Mammary epithelial cell (primary cell): ENCODE measurements at regions of chr15 and their contacts with region 1.

Region 1: DNA sequence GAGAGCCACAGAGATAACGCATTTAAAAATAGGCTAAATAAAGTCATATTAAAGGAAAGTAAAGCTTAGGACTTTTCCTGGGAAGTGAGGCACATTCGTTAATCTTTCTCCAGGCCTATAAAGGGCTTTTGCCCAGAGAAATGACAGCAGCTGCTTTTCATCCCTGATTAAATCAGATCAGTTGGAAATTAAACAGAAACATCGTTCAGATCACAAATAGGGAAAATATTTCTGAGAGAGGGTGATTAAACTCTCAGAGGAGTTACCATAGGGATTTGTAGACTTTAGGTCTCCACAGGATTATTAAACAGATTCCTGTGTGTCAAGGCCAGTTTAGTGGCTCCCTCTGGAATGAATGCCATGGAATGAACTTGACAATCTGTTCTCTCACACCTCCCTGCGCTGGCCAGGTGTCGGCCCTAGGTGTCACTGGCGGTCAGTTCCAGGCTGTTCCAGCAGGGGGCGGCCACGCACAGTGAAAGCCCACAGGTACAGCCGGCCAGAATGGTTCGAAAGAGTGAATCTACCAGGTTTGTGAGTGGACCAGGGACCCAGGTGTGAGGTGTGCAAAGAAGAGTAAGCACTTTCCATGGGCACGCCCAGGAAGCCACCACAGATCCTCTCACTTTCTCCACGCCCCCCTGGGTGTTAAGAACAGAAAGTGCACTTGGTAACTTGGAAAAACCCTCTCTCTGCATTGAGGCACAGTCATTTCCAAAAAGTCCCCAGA is 253.0 kb upstream of the RASGRP1 start:
- DNase-seq: peak; percentile 81
- H3K4me3 ChIP-seq: no peak overlapping the region
- H3K27ac ChIP-seq: no peak overlapping the region
- H3K4me1 ChIP-seq: peaks cover 6% of the 10 kb centered on the region
- H3K27me3 ChIP-seq: no peaks in the 10 kb centered on the region
- CTCF ChIP-seq: peak; percentile 99 to 100

Region 2: DNA sequence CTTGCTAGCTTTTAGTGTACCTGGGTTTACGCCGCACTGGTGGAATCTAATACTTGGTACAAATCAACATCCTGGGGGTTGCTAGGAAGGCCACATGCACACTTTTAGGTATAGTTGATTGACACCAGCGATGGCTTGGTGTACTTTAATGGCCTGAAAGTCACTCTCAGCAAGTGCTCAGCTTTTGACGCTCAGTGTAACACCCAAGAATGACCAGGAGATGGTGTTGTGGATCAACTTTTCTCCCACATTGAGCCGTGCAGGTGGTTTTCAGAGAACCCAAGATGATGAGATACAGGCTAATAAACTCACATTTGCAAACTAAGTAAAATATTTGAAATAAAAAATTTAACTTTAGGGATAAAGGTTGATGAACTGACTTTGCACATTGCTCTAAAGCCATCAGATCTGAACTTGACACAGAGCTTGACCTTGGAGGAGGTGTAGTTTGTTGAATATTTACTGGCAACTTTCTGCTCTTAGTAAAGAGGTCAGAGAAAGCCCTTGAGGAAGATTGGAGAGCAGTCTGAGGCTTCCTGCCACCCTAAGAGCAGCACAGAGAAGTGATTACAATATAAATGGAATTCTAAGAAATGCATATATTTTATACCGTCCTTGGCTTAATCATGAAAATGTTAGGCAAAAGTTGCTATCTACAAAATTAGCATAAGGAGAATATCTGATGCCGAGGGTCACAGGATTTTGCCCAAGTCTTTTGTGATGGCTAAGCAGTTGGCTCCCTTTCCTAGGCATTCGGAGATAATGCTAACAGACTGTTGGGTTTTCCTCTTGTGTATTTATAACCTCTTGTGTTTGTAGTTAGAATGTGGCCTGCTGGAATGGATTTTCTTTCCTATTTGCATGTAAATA is 109.6 kb before region 1 on chr15:
- CTCF ChIA-PET with region 1: interaction called, 5 read pairs
- dilution Hi-C with region 1: loop called (anchors 5 kb)
- in situ Hi-C with region 1: no loop called
- intact Hi-C with region 1: loop called (anchors 1 kb)
- DNase-seq: peak; percentile 52
- H3K4me3 ChIP-seq: no peak overlapping the region
- H3K27ac ChIP-seq: no peak overlapping the region
- H3K4me1 ChIP-seq: no peaks in the 10 kb centered on the region
- H3K27me3 ChIP-seq: no peaks in the 10 kb centered on the region
- CTCF ChIP-seq: peak; percentile 74 to 78

Region 3: GRCh38 chr15:38868326-38869114 is 50.9 kb after region 1 on chr15:
- CTCF ChIA-PET with region 1: no interaction called
- dilution Hi-C with region 1: no loop called
- in situ Hi-C with region 1: no loop called
- intact Hi-C with region 1: no loop called
- DNase-seq: peak; percentile 93
- H3K4me3 ChIP-seq: no peak overlapping the region
- H3K27ac ChIP-seq: no peak overlapping the region
- H3K4me1 ChIP-seq: peaks cover 12% of the 10 kb centered on the region
- H3K27me3 ChIP-seq: no peaks in the 10 kb centered on the region
- CTCF ChIP-seq: no peak

Region 4: DNA sequence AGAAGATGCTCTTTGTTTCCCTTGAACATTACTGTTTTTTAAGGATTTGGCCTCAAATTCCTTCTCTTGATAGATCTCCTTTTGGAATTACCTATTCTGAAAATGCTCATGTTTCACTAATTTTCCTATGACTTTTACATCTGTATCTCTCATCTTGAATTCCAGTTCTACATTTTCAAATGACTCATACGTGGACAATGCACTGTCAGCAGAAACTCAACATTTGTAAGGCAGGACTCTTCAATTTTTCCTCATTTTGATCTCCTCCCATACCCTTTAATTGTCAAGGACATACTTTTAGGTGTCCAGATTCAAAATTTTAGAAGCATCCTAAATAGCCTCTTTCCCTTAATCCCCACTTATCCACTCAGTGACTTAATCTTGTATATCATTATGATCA is 88.0 kb after region 1 on chr15:
- CTCF ChIA-PET with region 1: no interaction called
- dilution Hi-C with region 1: no loop called
- in situ Hi-C with region 1: no loop called
- intact Hi-C with region 1: no loop called
- DNase-seq: no peak
- H3K4me3 ChIP-seq: no peak overlapping the region
- H3K27ac ChIP-seq: no peak overlapping the region
- H3K4me1 ChIP-seq: no peaks in the 10 kb centered on the region
- H3K27me3 ChIP-seq: no peaks in the 10 kb centered on the region
- CTCF ChIP-seq: no peak

Region 5: GRCh38 chr15:38991126-38991525 is 173.5 kb after region 1 on chr15:
- CTCF ChIA-PET with region 1: no interaction called
- dilution Hi-C with region 1: no loop called
- in situ Hi-C with region 1: loop called in 1 of 2 experiments (anchors 10 kb)
- intact Hi-C with region 1: loop called (anchors 1 kb)
- DNase-seq: peak; percentile 24
- H3K4me3 ChIP-seq: no peak overlapping the region
- H3K27ac ChIP-seq: no peak overlapping the region
- H3K4me1 ChIP-seq: peaks cover 15% of the 10 kb centered on the region
- H3K27me3 ChIP-seq: no peaks in the 10 kb centered on the region
- CTCF ChIP-seq: peak; percentile 52 to 64

Region 6: DNA sequence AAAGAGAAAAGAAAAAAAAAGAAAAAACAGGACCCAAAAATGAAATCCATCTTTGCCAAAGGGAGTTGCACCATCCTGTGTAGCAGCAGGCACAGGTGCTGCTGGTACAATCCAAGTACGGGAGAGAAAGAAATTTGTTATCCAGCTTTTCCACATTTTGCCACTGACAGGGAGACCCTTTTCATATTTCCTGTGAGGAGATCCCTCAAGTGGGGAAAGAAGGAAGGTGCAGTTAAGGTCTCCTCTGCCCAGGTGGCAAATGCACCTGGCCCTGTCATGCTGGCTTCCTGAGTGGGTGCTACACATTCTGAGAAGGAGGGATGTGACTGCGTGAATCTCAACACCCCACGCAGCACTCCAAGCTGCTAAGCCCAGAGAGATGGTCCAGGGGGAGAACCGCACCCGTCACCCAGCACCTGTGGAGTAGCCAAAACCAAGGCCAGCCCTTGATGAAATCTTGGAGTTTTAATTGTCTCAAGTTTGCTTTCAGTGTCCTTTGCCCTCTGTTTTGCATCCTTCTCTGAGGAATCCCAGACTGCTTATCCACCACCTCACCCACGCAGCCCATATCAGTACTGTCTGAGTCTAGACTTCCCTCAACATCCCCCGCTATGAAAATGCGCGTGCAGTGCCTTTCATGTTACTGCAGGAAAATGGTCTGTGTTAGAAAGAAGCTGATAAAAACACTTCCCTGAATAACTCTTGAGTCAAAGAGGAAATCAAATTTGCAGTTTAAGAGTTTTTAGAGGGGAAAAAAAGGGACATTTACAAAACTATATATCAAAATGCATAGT is 621.4 kb after region 1 on chr15:
- CTCF ChIA-PET with region 1: no interaction called
- dilution Hi-C with region 1: no loop called
- in situ Hi-C with region 1: no loop called
- intact Hi-C with region 1: loop called (anchors 5 kb)
- DNase-seq: no peak
- H3K4me3 ChIP-seq: no peak overlapping the region
- H3K27ac ChIP-seq: no peak overlapping the region
- H3K4me1 ChIP-seq: no peaks in the 10 kb centered on the region
- H3K27me3 ChIP-seq: no peaks in the 10 kb centered on the region
- CTCF ChIP-seq: peak in 1 of 2 donors; percentile 35